ENCODE measurements at regions of chr5 and their contacts with region 1.

Region 1: DNA sequence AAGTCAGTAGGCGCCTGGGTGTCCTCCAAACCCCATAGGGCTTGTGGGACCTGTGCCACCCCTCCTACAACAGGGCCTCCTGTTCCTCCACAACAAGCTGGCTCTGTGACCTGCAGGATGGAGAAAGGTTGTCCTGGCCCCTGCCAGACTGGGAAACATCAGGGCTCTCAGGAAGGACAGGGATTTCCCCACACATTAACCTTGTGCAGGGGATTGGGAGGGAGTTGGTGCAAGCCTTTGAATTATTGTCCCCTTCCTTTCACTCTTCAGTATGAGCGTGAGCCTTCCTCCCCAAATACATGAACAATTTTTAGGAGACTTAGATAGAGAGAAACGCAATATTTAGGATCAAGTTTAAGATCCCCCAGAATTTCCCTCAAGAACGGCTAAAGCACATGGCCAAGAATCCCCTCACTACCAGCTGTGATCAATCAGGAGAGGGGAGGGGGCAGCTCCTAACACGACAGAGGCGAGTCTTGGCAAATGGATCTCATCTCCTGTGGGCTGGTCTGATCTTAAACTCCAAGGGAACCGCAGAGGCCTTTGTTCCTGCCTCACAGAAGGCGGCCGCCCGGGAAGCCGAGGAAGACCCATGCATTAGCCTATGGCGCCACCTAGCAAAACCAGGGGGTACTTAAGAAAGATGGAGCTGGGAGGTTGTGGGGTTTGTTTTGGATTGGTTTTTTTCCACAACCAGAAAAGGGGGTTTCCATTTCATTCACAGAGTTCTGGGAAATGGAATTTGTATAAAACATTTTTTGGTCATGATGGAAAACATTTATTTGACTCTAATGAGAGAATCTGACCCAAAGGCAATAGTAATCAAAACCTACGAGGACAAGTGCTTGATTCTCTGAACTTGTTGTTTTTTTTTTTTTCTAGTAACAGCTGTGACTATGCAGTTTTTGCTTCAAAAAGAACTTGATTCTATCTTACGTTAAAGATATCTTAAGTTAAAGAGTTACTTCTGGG is 36.1 kb upstream of the OSMR start:
- DNase-seq: peak; percentile 87
- H3K27ac ChIP-seq: no peak overlapping the region
- CTCF ChIP-seq: peak; percentile 86

Region 2: DNA sequence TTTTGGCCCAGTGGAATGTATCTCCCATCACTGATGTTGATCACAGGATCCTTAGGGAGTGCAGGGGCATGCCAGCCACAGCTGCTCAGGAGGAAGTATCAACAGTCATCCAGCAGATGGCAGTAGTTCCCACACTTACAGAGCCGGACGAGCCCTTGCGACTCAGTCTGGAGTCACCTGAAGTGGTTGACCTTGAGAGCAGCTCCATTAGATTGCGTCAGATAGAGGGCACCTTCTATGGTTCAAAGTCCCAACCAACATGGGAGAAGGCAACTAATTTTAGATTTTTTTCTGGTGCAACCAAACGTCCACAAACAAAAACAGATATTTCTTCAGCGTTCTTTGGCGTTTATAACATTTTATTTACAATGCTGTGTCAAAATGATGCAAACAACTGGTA is 426.8 kb before region 1 on chr5:
- CTCF ChIA-PET with region 1: interaction called, 11 read pairs
- POLR2A ChIA-PET with region 1: no interaction called
- DNase-seq: peak; percentile 82
- H3K27ac ChIP-seq: no peak overlapping the region
- CTCF ChIP-seq: peak; percentile 82

Region 3: GRCh38 chr5:38831909-38832308 is 22.2 kb after region 1 on chr5:
- CTCF ChIA-PET with region 1: no interaction called
- POLR2A ChIA-PET with region 1: no interaction called
- DNase-seq: no peak
- H3K27ac ChIP-seq: peak overlapping the region; percentile 89
- CTCF ChIP-seq: no peak